AG04450 (cell line): ENCODE measurements at regions of chr16 and their contacts with region 1.

Region 1: DNA sequence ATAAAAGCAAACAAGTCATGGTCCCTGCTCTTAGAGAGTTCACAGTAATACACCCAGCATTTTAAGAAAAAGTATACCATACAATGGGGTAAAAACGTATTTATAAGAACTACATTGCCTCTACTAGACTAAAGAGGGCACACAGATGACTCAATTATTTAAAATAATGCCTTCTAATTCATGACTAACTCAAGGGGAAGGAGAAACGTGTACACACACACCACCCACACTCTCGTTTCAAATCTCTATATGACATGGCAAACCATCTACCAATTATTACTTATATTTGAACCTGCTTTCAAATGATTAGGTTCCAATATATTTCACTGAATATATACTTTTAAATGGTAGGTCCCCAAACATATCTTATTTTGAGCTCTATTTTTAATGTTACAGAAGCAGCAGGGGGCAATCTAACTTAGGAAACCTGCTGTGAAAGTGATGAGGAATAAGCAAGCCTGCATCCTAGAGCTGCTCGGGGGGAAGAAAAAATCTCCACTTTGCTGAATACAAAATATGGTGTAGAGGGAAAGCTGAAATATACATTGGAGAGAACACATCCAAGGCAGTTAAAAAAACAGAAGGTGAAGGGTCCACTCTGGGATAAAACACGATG is 232.4 kb upstream of the PSMD7 start:
- DNase-seq: no peak
- H3K4me3 ChIP-seq: no peak overlapping the region
- H3K27ac ChIP-seq: no peak overlapping the region
- H3K27me3 ChIP-seq: no peaks in the 10 kb centered on the region
- CTCF ChIP-seq: peak; percentile 34

Region 2: GRCh38 chr16:74275002-74275636 is 210.9 kb after region 1 on chr16:
- CTCF ChIA-PET with region 1: interaction called, 49 read pairs
- POLR2A ChIA-PET with region 1: no interaction called
- DNase-seq: no peak
- H3K4me3 ChIP-seq: no peak overlapping the region
- H3K27ac ChIP-seq: no peak overlapping the region
- H3K27me3 ChIP-seq: no peaks in the 10 kb centered on the region
- CTCF ChIP-seq: peak; percentile 63